ENCODE measurements at regions of chr1 and their contacts with region 1.

Region 1: DNA sequence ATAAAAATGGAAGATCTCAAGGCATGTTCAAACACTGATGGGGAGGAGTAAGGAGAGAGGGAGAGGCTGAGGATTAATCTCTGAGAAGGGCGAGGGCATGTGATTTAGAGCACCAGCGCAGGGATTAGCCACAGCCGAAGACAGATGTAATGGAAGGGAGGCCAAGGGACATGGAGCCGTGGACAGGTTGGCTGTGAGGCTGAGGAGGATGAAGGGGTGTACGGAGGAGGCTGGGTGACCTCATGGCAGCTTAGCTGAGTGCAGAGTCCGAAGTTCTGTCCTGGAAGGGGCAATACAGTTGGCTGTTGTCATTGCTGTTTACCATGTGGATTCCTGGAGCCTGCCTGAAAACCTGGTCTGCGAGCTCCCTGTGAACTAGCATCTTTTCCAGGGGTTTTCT is 342.8 kb downstream of the RPS6KC1 start:
- DNase-seq: no peak
- H3K4me3 ChIP-seq: no peak overlapping the region
- H3K27ac ChIP-seq: no peak overlapping the region
- H3K4me1 ChIP-seq: no peaks in the 10 kb centered on the region
- H3K27me3 ChIP-seq: no peaks in the 10 kb centered on the region
- CTCF ChIP-seq: no peak

Region 2: DNA sequence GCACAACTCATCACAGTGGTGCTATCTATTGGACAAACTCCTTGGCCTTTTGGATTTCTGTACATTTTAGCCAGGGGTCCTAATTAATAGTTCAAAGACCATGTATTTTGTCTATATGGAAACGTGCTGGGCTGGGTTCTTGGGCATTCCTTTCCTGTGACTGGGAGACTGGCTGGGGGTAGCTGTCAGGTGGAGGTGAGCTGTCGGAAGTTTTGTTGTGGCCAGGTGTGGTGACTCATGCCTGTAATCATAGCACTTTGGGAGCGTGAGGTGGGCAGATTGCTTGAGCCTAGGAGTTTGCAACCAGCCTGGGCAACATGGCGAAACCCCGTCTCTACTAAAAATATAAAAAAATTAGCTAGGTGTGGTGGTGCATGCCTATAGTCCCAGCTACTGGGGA is 49.6 kb after region 1 on chr1:
- CTCF ChIA-PET with region 1: no interaction called
- dilution Hi-C with region 1: no loop called
- in situ Hi-C with region 1: no loop called
- intact Hi-C with region 1: no loop called
- DNase-seq: peak; percentile 81
- H3K4me3 ChIP-seq: no peak overlapping the region
- H3K27ac ChIP-seq: no peak overlapping the region
- H3K4me1 ChIP-seq: peaks cover 3% of the 10 kb centered on the region
- H3K27me3 ChIP-seq: peaks cover 19% of the 10 kb centered on the region
- CTCF ChIP-seq: no peak

Region 3: GRCh38 chr1:213499444-213499843 is 105.6 kb after region 1 on chr1:
- CTCF ChIA-PET with region 1: no interaction called
- dilution Hi-C with region 1: no loop called
- in situ Hi-C with region 1: no loop called
- intact Hi-C with region 1: no loop called
- DNase-seq: no peak
- H3K4me3 ChIP-seq: no peak overlapping the region
- H3K27ac ChIP-seq: no peak overlapping the region
- H3K4me1 ChIP-seq: no peaks in the 10 kb centered on the region
- H3K27me3 ChIP-seq: no peaks in the 10 kb centered on the region
- CTCF ChIP-seq: no peak

Region 4: GRCh38 chr1:213541641-213542040 is 147.8 kb after region 1 on chr1:
- CTCF ChIA-PET with region 1: no interaction called
- dilution Hi-C with region 1: loop called (anchors 5 kb)
- in situ Hi-C with region 1: no loop called
- intact Hi-C with region 1: no loop called
- DNase-seq: no peak
- H3K4me3 ChIP-seq: no peak overlapping the region
- H3K27ac ChIP-seq: no peak overlapping the region
- H3K4me1 ChIP-seq: no peaks in the 10 kb centered on the region
- H3K27me3 ChIP-seq: no peaks in the 10 kb centered on the region
- CTCF ChIP-seq: no peak

Region 5: GRCh38 chr1:213585959-213586586 is 192.2 kb after region 1 on chr1:
- CTCF ChIA-PET with region 1: no interaction called
- dilution Hi-C with region 1: no loop called
- in situ Hi-C with region 1: no loop called
- intact Hi-C with region 1: no loop called
- DNase-seq: no peak
- H3K4me3 ChIP-seq: no peak overlapping the region
- H3K27ac ChIP-seq: no peak overlapping the region
- H3K4me1 ChIP-seq: no peaks in the 10 kb centered on the region
- H3K27me3 ChIP-seq: peaks cover 1% of the 10 kb centered on the region
- CTCF ChIP-seq: no peak

Measured in mammary epithelial cell (primary cell).